T-cell (primary cell): ENCODE measurements at regions of chr17 and their contacts with region 1.

Region 1: DNA sequence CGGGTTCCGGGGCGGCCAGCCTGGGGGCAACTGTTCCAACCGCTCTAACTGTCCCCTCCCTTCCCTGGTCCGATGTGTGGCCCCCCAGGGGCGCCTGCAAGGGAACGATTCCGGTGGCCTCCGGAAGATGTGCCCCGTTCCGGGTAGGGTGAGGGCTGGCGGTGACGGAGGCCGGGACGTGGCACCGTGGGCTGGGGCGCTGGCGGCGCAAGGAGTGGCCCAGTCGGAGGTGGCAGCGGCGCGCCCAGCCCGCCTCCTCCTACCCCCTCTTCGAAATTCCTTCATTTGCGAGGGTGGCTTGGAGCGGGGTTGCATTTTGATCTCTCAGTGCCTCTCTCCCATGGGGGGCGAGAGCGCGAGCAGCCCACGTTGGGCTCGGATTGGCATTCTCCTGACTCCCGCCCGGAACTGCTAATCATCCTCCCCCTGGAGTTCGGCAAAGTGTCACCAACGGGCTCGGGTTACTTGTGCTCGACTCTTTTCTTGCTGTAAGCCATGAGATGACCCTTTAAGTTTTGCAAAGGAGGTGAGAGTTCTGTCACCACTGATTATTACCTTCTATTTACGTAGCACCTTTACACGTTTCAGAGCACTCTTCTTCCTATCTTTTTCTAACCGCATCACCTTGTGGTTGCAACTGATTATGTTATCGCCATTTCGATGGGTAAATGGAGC is 622 bp downstream of the NDEL1 start:
- DNase-seq: peak in 29 of 35 experiments; percentile 7 to 72 (median 46)
- ATAC-seq: peak; percentile 52 to 74 (median 72)
- H3K4me3 ChIP-seq: peak overlapping the region; percentile 78 to 98
- H3K4me3 Mint-ChIP-seq: peak overlapping the region; percentile 93 to 98 (median 96)
- H3K27ac ChIP-seq: peak overlapping the region; percentile 94
- H3K27ac Mint-ChIP-seq: peak overlapping the region; percentile 94 to 98
- H3K4me1 ChIP-seq: peaks cover 16 to 25% of the 10 kb centered on the region in 2 experiments
- H3K4me1 Mint-ChIP-seq: peaks cover 49 to 52% (median 49%) of the 10 kb centered on the region in 3 donors
- H3K27me3 ChIP-seq: no peaks in the 10 kb centered on the region
- H3K27me3 Mint-ChIP-seq: no peaks in the 10 kb centered on the region

Region 2: GRCh38 chr17:8409966-8410864 is 26.1 kb before region 1 on chr17:
- CTCF ChIA-PET with region 1: interaction called in 1 of 2 experiments, 14 read pairs
- POLR2A ChIA-PET with region 1: no interaction called
- DNase-seq: peak; percentile 18 to 90 (median 69)
- ATAC-seq: peak; percentile 78 to 88 (median 80)
- H3K4me3 ChIP-seq: no peak overlapping the region
- H3K4me3 Mint-ChIP-seq: no peak overlapping the region
- H3K27ac ChIP-seq: no peak overlapping the region
- H3K27ac Mint-ChIP-seq: no peak overlapping the region
- H3K4me1 ChIP-seq: peaks cover 0 to 11% of the 10 kb centered on the region in 2 experiments
- H3K4me1 Mint-ChIP-seq: peaks cover 7 to 16% (median 16%) of the 10 kb centered on the region in 3 donors
- H3K27me3 ChIP-seq: peaks cover 0 to 32% of the 10 kb centered on the region in 2 experiments
- H3K27me3 Mint-ChIP-seq: peaks cover 5 to 10% of the 10 kb centered on the region in 2 donors

Region 3: DNA sequence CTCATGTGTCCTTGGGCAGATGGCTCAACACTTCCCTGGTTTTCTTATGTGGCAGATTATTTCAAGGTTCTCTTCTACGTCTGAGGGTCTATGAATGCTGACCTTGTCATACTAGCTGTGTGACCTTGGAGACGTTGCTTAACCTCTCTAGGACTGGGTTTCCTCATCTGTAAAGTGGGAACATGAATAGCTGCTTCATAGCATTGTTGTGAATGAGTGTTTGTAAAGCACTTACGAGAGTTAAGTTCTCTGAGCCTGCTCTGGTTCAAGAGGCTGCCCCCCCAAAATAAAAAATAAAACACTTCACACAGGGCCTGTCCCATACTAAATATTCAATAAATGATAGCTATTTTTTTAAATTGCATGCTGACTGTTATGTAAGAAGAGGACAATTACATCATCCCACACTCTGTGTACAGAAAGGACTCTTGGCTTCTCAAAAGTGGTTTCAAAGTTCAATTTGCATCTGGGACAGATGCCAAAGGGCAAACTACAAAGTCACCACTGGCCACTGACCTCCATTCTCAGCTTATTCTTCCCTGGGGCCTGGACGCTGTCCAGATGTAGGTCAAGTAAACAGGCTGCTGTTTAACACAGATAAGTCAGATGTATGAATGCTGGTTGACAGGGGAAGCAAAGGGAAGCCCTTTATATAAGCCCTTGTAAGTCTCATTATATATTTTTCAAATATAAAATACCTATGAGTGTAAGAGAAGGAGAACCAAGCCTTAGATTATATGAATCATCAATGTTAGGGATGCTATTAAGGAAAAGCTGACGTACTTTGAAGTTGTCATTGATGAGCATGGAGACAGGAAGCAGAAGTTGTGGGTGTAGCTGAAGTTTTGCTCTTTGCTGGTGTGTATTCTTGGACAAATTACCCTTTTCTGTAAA is 16.0 kb before region 1 on chr17:
- CTCF ChIA-PET with region 1: no interaction called
- POLR2A ChIA-PET with region 1: no interaction called
- DNase-seq: no peak
- ATAC-seq: no peak
- H3K4me3 ChIP-seq: no peak overlapping the region
- H3K4me3 Mint-ChIP-seq: no peak overlapping the region
- H3K27ac ChIP-seq: no peak overlapping the region
- H3K27ac Mint-ChIP-seq: no peak overlapping the region
- H3K4me1 ChIP-seq: no peaks in the 10 kb centered on the region
- H3K4me1 Mint-ChIP-seq: no peaks in the 10 kb centered on the region
- H3K27me3 ChIP-seq: peaks cover 0 to 34% of the 10 kb centered on the region in 2 experiments
- H3K27me3 Mint-ChIP-seq: peaks cover 39 to 66% of the 10 kb centered on the region in 2 donors

Region 4: GRCh38 chr17:8447799-8448198 is 11.5 kb after region 1 on chr17:
- CTCF ChIA-PET with region 1: no interaction called
- POLR2A ChIA-PET with region 1: interaction called, 4 to 12 read pairs
- DNase-seq: no peak
- ATAC-seq: no peak
- H3K4me3 ChIP-seq: no peak overlapping the region
- H3K4me3 Mint-ChIP-seq: no peak overlapping the region
- H3K27ac ChIP-seq: no peak overlapping the region
- H3K27ac Mint-ChIP-seq: no peak overlapping the region
- H3K4me1 ChIP-seq: peaks cover 0 to 8% of the 10 kb centered on the region in 2 experiments
- H3K4me1 Mint-ChIP-seq: peaks cover 28 to 33% (median 32%) of the 10 kb centered on the region in 3 donors
- H3K27me3 ChIP-seq: no peaks in the 10 kb centered on the region
- H3K27me3 Mint-ChIP-seq: no peaks in the 10 kb centered on the region